Activated naive CD4-positive, alpha-beta T cell treated with anti-CD3 and anti-CD28 coated beads for 36 hours (primary cell): ENCODE measurements at regions of chr3 and their contacts with region 1.

Region 1: GRCh38 chr3:23726811-23727548 is 78.8 kb upstream of the UBE2E1 start:
- DNase-seq: peak; percentile 20
- H3K4me3 Mint-ChIP-seq: no peak overlapping the region
- H3K27ac Mint-ChIP-seq: no peak overlapping the region
- H3K4me1 Mint-ChIP-seq: peaks cover 9% of the 10 kb centered on the region
- H3K27me3 Mint-ChIP-seq: no peaks in the 10 kb centered on the region

Region 2: GRCh38 chr3:23740517-23740965 is 13.6 kb after region 1 on chr3:
- CTCF ChIA-PET with region 1: no interaction called
- intact Hi-C with region 1: loop called (anchors 2 kb)
- DNase-seq: peak; percentile 77
- H3K4me3 Mint-ChIP-seq: no peak overlapping the region
- H3K27ac Mint-ChIP-seq: no peak overlapping the region
- H3K4me1 Mint-ChIP-seq: peaks cover 8% of the 10 kb centered on the region
- H3K27me3 Mint-ChIP-seq: peaks cover 16% of the 10 kb centered on the region